ENCODE measurements at regions of chr11 and their contacts with region 1.

Region 1: GRCh38 chr11:67382276-67383136 is 9.1 kb upstream of the CLCF1 start:
- DNase-seq: peak; percentile 58
- H3K4me3 ChIP-seq: no peak overlapping the region
- H3K27ac ChIP-seq: no peak overlapping the region
- H3K4me1 ChIP-seq: peaks cover 32% of the 10 kb centered on the region
- H3K27me3 ChIP-seq: no peaks in the 10 kb centered on the region
- CTCF ChIP-seq: peak; percentile 99 to 100

Region 2: DNA sequence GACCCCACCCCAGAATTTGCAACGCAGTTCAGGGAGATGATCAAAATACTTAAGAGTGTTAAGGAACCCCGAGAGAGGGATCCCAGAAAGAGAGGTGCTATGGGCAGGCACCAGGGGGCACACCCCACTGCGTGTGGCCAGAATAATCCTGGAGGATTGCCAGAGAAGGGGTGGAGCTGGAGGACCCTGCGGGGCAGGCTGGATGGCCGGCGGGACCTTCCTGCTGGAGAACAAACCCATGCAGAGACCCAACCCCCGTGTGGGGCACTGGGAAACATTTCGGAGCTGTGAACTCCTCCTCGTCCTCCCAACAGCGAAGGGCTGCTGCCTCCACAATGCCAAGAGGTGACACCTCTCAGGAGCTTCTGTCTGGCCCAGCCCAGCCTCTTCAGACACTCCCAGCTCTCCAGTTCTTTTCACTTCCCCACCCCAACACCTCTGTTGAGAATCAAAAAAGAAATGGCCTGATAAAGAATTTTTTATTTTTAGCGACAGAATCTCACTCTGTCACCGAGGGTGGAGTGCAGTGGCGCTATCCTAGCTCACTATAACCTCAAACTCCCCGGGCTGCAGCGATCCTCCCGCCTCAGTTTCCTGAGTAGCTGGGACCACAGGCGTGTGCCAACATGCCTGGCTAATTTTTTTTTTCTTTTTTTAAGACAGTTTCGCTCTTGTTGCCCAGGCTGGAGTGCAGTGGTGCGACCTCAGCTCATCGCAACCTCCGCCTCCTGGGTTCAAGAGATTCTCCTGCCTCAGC is 300.3 kb before region 1 on chr11:
- CTCF ChIA-PET with region 1: interaction called, 14 read pairs
- dilution Hi-C with region 1: no loop called
- in situ Hi-C with region 1: no loop called
- intact Hi-C with region 1: no loop called
- DNase-seq: no peak
- H3K4me3 ChIP-seq: no peak overlapping the region
- H3K27ac ChIP-seq: no peak overlapping the region
- H3K4me1 ChIP-seq: peaks cover 30% of the 10 kb centered on the region
- H3K27me3 ChIP-seq: no peaks in the 10 kb centered on the region
- CTCF ChIP-seq: peak in 1 of 2 donors; percentile 24

Region 3: DNA sequence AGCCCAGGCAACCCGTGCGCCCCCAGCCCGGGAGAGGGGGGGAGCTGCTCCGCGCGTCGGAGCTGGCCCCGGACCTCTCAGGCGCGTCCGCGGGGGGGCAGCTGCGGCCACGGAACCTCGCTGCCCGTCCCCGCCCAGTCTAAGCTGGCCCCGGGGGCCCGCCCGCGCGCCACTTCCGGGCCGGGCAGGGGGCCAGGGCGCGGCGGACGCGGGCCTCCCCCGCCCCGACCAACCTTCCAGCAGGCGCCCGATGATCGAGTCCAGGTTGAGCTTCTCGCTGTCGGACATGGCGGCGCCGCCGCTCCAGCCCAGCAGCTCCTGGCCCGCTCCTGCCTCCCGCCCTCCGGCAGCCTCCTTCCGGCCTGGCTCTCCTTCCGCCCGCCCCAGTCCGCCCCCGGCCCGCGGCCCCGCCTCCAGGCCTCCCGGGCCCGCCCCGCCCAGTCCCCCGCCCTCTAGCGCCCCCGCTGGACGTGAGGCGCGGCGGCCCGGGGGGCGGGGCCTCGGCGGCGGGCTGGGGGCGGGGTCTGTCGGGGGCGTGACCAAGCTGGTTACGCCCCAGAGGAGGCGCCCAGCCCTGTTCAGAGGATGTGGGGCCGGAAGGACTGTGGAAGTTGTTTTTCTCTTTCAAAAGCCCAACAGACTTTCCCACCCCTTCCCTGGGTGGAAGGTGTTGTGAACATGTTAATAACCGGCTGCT is 19.1 kb after region 1 on chr11 and contains the start of gene PPP1CA:
- CTCF ChIA-PET with region 1: no interaction called
- dilution Hi-C with region 1: no loop called
- in situ Hi-C with region 1: no loop called
- intact Hi-C with region 1: no loop called
- DNase-seq: peak; percentile 81
- H3K4me3 ChIP-seq: peak within 1 kb of the TSS; percentile 85 to 95 (median 89)
- H3K27ac ChIP-seq: peak within 1 kb of the TSS; percentile 58
- H3K4me1 ChIP-seq: peaks cover 17% of the 10 kb centered on the region
- H3K27me3 ChIP-seq: no peaks in the 10 kb centered on the region
- CTCF ChIP-seq: peak in 1 of 2 donors; percentile 29
- total RNA-seq, gene PPP1CA: 178 to 182 TPM

Measured in mammary epithelial cell (primary cell).